AG04449 (cell line): ENCODE measurements at regions of chr3 and their contacts with region 1.

Region 1: DNA sequence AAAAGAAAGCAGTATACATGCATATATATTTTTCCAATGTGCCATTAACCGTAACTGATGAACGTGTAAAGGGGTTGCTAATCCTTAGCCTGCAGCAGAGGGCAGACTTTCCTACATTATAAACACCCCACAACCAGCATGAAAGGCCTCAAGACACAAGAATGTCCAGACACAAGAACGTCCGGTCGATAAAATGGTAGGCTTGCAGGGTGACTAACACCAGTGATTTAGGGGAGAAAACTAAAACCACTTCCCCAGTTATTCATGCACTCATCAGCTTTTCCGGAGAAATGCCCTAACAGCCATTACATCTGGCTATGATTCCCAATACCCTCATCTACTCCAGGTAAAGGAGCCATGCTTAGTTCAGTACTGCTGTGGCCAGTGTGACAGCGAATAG is 57.4 kb downstream of the LRTM1 start:
- DNase-seq: peak; percentile 96
- H3K4me3 ChIP-seq: no peak overlapping the region
- CTCF ChIP-seq: peak; percentile 67

Region 2: DNA sequence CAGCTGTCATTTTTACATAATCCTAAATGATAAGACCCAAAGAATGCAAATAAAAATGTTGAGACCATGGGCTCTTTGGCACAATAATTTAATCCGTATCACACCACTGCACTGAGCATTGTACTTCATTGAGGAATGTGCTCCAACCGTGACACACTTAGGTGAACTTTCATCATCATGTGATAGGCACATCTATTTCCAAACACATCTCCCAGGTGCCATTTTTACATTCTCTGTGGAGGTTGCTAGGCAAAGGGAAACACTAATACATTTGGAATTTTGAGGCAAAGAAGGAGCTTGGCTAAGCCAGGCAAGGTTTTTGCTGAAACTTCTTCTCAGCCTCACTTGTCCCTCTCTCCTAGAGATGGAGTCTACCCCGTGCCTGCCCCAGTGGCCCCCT is 11.2 kb before region 1 on chr3:
- CTCF ChIA-PET with region 1: interaction called, 13 read pairs
- POLR2A ChIA-PET with region 1: no interaction called
- DNase-seq: no peak
- H3K4me3 ChIP-seq: no peak overlapping the region
- CTCF ChIP-seq: no peak